Right ventricle myocardium superior (tissue), 1 donor: ENCODE measurements at regions of chr11 and their contacts with region 1.

Region 1: DNA sequence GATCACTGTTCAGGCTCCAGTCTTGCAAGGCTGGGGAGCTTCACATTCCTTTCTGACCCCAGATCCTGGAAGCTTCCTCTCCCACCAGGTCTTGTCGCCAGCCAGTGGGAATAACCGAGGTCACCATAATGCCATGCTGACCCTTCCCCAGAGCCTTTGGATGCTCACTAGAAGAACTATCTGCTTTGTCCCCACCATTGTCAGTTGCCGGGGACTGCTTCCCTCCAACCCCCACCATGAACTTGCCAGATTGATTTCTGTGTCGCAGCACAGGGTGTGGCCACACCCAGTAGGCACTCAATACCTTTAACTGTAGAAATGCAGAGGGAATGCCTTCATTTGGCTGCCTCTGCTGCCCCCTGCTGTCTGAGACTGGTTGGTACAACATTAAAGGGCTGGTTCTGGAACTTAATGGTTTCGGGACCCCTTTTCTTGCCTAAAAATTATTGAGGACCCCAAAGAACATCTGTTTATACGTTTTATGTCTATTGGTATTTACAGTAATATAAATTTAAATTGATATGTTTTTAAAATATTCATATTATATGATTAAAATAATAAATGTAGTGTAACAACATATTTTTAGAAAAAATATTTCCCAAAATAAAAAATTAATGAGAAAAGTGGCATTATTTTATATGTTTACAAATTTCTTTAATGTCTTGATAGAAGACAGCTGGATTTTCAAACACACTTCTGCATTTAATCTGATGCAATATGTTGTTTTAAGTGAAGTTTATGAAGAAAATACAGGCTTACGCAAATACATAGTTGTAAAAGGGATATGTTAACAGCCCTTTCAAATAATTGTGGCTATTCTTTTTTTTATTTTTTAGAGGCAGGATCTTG is 6.7 kb upstream of the GDPD5 start:
- DNase-seq: peak; percentile 79
- ATAC-seq: peak; percentile 75

Region 2: DNA sequence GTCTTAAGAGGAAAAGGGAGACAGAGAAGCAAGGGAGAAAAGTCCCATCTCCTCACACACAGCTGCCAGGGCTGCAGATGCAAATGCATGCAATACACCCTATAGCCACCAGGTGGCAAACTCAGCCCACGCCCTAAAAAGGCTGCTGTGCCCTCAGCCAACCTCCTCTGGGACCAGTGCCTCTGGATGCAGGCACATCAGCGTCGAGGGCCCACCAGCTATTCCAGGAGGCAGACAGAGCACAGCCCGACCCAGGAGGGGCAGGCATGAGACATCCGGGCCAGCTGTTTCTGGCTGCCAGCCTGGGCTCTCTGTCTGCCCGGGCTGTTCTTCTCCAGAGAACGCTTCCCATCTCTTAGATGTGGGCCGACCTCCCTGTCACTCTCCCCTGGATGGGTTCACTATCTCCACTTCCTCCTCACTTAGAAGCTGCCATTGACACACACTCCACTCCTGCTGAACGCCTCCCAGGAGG is 252.2 kb before region 1 on chr11:
- intact Hi-C with region 1: loop called (anchors 5 kb)
- DNase-seq: peak; percentile 83
- ATAC-seq: peak; percentile 91

Region 3: GRCh38 chr11:75388386-75389275 is 143.8 kb before region 1 on chr11:
- intact Hi-C with region 1: loop called (anchors 5 kb)
- DNase-seq: peak; percentile 73
- ATAC-seq: peak; percentile 80

Region 4: GRCh38 chr11:75445315-75445953 is 87.0 kb before region 1 on chr11:
- intact Hi-C with region 1: loop called (anchors 1 kb)
- DNase-seq: peak; percentile 76
- ATAC-seq: peak; percentile 79

Region 5: DNA sequence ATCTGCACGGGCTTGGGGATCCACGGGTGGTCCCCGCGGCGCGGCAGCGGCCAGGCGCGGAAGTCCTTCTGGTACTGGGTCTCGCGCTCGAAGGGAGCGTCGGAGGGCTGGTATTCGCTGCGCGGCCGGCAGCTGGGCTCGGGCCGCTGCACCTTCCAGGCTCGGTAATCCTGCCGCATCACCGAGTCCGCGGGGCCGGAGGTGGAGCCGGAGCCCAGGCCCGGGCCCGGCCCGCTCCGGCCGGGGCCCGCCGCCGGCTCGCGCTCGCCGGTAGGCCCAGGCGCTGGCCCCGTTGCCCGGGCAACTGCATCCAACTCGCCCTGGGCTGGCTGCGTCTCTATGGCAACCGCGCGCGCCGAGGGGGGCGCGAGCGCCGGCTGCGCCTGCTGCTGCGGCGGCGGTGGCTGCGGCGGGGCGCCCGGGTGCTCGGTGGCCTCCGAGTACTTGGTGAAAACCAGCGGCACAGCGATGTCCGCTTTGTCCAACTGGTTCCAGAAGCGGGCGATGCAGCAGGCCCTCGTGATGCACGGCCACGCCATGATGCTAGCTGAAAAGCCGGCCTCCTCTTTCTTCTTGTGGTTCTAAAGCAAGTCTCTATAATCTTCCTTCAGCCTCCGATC is 135.5 kb after region 1 on chr11:
- intact Hi-C with region 1: no loop called
- DNase-seq: peak; percentile 74
- ATAC-seq: peak; percentile 55

Region 6: DNA sequence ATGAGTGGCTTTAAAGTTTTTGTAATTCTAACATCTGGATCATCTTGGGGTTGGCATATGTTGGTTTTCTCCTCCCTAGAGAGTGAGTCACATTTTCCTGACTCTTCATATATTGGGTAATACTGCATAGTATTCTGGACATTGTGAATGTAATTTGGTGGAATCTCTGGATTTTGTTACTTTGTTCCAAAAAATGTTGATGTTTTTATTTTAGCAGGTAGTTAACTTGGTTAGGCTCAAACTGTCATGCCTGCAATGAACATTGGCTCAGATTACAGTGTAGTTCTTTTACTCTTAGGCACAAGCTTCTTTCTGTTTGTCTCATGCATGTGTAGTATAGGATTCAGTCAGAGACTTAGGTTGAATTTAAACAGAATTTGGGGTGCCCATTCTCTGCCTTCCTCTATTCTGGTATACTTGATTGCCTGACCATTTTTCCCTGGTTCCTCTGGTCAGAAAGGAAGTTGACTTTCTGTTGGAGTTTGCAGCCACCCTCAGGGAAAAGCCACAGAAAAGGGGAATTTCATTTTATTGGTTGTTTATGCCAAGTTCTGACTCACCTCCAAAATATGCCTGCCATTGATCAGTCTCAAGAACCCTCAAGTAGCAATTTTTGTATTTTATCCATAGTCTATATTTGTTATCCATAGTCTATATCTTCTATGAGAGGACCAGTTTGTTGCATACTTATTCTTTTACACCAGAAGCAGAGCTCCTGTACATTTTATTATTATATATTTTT is 434.3 kb after region 1 on chr11:
- intact Hi-C with region 1: no loop called
- DNase-seq: no peak
- ATAC-seq: no peak